ENCODE measurements at regions of chr20 and their contacts with region 1.

Region 1: DNA sequence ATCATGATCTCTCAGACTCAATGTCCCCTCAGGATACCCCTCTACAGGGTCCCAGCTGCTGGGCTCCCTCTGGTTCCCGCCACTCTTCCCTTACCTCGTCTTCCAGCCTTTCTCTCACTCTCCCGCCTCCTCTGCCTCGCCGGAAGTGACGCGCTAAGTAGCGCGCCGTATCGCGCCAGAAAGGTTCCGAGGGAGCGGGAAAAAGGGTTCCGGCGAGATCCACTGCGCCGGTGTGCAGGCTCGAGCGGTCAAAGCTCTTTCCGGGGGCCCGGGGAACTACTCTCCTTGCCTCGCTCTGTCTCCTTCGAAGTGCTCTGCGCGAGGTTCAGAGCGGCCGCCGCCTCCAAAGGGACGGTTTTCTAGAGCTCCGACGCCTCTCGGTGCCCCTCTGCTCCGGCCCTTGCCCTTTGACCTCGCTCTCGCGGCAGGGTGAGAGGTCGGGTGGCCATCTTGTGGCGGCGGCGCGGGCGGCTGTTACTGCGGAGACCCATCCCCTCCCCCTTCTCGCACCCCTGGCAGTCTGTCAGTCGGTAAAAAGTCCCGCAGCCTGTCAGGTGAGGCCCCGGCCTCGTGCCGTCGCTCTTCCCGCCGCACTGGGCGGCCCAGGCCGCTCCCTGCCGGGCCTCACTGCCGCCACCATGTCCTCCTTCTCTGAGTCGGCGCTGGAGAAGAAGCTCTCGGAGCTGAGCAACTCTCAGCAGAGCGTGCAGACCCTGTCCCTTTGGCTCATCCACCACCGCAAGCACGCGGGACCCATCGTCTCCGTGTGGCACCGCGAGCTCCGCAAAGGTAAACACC is at the starts of genes RPRD1B and TTI1:
- DNase-seq: no peak
- H3K4me3 ChIP-seq: peak within 1 kb of the TSS; percentile 95
- CTCF ChIP-seq: no peak

Region 2: DNA sequence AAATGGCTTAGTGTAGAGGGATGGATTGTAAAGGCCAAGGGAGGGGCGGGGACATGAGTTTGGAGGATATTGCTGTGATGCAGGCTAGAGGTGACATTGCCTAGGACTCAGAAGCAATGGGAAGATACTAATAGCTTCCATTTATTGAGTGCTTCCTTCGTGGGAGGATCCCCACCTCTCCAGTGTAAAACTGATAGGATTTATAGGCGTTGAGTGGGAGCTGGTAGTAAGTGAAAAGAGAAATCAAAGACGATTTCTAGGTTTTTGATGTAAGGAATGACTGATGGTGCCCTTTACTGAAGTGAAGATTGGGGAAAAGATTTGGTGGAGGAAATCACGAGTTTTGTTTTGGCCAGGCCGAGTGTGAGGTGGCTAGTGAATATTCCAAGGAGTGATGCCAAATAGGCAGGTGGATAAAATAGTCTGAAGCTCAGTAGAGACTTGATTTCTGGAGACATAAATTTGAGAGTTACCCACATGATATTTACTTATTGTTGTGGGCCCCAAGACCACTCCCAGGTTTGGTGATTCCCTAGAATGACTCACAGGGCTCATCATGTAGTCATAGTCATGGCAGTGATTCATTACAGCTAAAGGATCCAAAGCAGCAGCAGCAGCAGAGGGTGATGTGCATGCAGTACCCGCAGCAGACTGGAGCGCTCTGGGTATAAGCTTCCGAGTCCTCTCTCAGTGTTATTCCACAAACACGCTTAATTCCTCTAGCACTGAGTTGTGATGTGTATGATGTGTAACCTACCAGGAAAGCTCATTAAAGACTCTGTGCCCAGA is 10.2 kb after region 1 on chr20:
- CTCF ChIA-PET with region 1: interaction called, 16 read pairs
- POLR2A ChIA-PET with region 1: interaction called, 9 read pairs
- DNase-seq: no peak
- H3K4me3 ChIP-seq: no peak overlapping the region
- CTCF ChIP-seq: peak; percentile 12

Measured in AG04449 (cell line).